Gastrocnemius medialis (tissue), 4 donors: ENCODE measurements at regions of chr1 and their contacts with region 1.

Region 1: DNA sequence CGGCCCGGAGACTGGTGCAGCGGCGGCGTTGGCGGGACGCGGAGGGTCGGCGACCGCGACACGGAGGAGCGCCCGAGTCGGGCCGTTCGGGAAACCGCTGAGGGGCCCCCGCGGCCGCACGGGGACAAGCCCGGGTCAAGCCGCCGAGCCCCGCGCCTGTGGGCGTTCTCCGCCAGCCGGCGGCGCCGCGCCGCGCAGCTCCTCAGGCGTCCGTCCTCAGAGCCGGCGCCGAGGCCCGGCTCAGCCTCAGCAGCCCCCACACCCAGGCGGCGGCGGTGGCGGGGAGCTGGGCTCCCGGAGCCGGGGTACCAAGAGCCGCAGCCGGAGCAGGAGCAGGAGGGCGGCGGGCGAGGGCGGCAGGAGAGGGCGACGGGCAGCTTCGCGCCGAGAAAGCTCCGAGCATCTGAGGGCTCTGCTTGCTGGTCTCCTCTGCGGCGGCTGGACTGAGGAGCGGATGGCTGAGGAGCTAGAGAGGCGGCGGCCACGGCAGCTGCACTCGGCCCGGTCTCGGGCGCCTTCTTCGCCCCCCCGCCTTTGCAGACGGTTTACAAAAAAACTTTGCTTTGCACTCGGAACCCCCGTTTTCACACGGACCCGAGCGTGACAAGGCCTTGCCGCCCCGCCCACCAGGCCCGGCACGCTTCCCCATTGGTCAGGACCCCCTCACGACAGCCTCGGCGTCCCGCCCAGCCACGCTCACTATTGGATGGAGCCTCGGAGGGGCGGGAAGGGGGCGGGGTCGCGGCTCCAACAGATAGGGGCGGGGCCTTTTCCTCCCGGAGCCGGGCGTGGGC is at the start of gene SLC30A1:
- DNase-seq: peak; percentile 97 to 98
- ATAC-seq: peak; percentile 89
- H3K4me3 ChIP-seq: peak within 1 kb of the TSS; percentile 76 to 88 (median 84)
- H3K27ac ChIP-seq: peak within 1 kb of the TSS; percentile 78 to 90 (median 86)
- H3K4me1 ChIP-seq: peaks cover 26 to 30% of the 10 kb centered on the region in 2 donors
- H3K27me3 ChIP-seq: no peaks in the 10 kb centered on the region
- CTCF ChIP-seq: no peak
- POLR2A ChIP-seq: peak; percentile 77 to 87
- total RNA-seq, gene SLC30A1: 1.3 to 3.0 (median 2.1) TPM

Region 2: DNA sequence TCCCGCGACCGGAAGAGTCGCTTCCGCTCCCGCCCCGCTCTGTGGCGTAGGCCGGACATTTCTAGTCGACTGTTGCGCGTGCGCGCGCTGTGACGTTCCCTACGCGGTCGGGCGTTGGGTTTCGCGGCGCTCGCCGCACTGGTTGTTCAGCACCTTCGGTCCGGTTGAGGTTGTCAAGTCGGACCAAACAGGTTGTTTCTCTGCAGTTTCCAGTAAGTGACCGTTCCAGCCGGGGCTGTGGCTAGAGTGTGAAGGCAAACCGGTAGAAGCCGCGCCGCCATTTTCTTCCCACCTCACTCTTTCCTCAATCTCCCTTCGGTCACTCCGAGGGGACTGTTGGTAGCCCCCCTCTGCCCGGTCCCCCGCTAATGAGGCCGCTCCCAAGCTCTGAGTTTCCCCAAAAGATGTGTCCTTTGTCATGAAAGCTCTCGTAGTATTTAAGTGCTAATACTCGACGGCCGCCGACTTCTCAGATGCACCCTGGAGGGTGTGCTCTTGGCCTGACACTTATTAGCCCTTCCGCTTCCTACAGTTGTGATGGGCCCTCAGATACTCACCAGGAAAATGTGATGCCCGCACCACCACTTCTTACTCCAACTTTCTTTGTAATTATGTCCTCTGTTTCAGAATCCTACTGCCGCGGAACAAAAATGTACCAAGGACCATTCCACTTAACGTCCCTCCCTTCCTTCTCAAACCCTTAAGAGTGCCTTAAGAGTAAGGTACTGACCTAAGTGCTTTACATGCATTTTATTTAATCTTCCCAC is 195.9 kb before region 1 on chr1:
- in situ Hi-C with region 1: no loop called
- intact Hi-C with region 1: loop called (anchors 2 kb)
- DNase-seq: peak; percentile 73 to 89
- ATAC-seq: peak; percentile 96 to 99
- H3K4me3 ChIP-seq: peak overlapping the region; percentile 75 to 92 (median 88)
- H3K27ac ChIP-seq: peak overlapping the region; percentile 91 to 98 (median 94)
- H3K4me1 ChIP-seq: peaks cover 5 to 8% of the 10 kb centered on the region in 2 donors
- H3K27me3 ChIP-seq: no peaks in the 10 kb centered on the region
- CTCF ChIP-seq: no peak
- POLR2A ChIP-seq: peak; percentile 87

Region 3: GRCh38 chr1:211514030-211514754 is 64.6 kb before region 1 on chr1:
- in situ Hi-C with region 1: no loop called
- intact Hi-C with region 1: loop called (anchors 2 kb)
- DNase-seq: peak; percentile 41 to 46
- ATAC-seq: peak; percentile 80 to 82
- H3K4me3 ChIP-seq: no peak overlapping the region
- H3K27ac ChIP-seq: no peak overlapping the region
- H3K4me1 ChIP-seq: no peaks in the 10 kb centered on the region
- H3K27me3 ChIP-seq: peaks cover 0 to 3% (median 0%) of the 10 kb centered on the region in 3 donors
- CTCF ChIP-seq: peak in 4 of 5 experiments; percentile 17 to 68 (median 59)
- POLR2A ChIP-seq: no peak

Region 4: GRCh38 chr1:211527006-211527405 is 51.8 kb before region 1 on chr1:
- in situ Hi-C with region 1: no loop called
- intact Hi-C with region 1: no loop called
- DNase-seq: no peak
- ATAC-seq: no peak
- H3K4me3 ChIP-seq: no peak overlapping the region
- H3K27ac ChIP-seq: no peak overlapping the region
- H3K4me1 ChIP-seq: peaks cover 0 to 8% of the 10 kb centered on the region in 2 donors
- H3K27me3 ChIP-seq: no peaks in the 10 kb centered on the region
- CTCF ChIP-seq: no peak
- POLR2A ChIP-seq: no peak

Region 5: DNA sequence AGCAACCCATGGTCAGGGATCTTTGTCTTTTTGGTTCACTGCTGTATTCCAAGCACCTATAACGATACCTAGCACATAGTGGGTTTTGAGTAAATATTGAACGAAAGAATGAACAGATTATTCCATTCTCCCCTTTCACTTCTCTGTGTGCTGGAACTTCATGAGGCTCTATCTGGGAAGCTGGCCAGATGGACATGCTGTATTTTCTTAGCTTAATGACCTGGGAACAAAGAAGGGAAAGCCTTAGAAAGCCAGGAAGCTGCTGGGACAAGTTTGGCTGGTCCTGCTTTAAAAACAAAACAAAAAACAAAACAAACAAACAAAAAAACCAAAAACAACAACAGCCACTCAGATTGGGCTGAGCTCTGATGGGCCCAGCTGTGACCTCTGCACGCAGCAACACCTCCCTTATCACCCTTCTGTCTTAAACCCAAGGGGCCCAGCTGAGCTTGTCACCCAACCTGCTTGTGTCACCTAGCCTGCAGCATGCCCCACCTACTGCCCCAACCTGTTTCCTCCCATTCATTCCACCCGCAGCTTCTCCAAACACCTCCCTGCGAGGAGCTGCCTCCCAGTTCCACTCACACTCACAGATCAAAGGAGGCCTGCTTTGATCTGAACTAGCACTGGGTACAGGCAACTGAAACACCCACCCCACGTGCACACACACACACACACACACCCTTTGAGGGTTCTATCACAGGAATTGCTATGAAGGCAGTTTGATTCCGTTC is 37.0 kb before region 1 on chr1:
- in situ Hi-C with region 1: no loop called
- intact Hi-C with region 1: no loop called
- DNase-seq: no peak
- ATAC-seq: no peak
- H3K4me3 ChIP-seq: no peak overlapping the region
- H3K27ac ChIP-seq: no peak overlapping the region
- H3K4me1 ChIP-seq: no peaks in the 10 kb centered on the region
- H3K27me3 ChIP-seq: no peaks in the 10 kb centered on the region
- CTCF ChIP-seq: no peak
- POLR2A ChIP-seq: no peak

Region 6: GRCh38 chr1:211643324-211644212 is 64.7 kb after region 1 on chr1:
- in situ Hi-C with region 1: no loop called
- intact Hi-C with region 1: no loop called
- DNase-seq: no peak
- ATAC-seq: peak in 1 of 2 donors; percentile 61
- H3K4me3 ChIP-seq: no peak overlapping the region
- H3K27ac ChIP-seq: no peak overlapping the region
- H3K4me1 ChIP-seq: peaks cover 0 to 6% of the 10 kb centered on the region in 2 donors
- H3K27me3 ChIP-seq: no peaks in the 10 kb centered on the region
- CTCF ChIP-seq: no peak
- POLR2A ChIP-seq: no peak